ENCODE measurements at regions of chr10 and their contacts with region 1.

Region 1: DNA sequence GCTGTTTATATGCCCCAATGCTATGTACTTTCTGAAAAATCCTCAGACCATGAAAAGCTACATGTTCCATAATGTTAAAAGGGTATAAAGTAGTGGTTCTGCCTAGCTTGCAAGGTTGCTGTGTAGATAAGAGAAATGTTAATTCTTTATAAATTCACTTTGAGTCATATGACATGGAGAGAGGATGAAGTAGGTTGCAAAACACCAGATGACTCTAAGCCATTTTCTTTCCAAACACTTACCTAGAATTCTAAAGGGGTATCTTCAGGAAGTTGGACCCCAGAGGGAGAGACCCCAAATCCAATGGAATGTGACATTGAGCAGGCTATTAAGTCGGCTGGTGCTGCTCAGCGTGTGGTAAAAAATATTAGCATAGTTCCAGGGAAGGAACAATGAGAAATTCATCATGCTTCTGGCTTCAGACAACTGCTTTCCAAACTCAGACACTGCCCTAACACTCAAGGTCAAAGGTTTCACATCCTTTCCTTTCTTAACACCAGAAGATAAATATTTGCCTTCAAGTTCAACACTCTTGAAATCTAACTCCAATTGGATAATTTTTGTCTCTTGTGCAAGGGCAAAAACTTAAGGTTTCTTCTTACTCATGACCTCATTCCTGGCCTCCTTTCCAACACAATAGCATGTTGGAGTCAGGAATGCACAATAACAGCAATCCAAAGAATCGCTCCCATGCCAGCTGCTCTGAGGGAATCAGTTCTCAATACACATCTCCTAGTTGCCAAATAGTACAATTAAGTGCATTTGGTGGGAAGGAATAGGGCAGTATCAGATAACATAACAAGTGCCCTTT is 100.7 kb upstream of the AFAP1L2 start:
- DNase-seq: no peak
- ATAC-seq: no peak
- H3K4me3 ChIP-seq: no peak overlapping the region
- H3K4me3 Mint-ChIP-seq: no peak overlapping the region
- H3K27ac ChIP-seq: no peak overlapping the region
- H3K27ac Mint-ChIP-seq: peak overlapping the region; percentile 78
- H3K4me1 ChIP-seq: peaks cover 96% of the 10 kb centered on the region
- H3K4me1 Mint-ChIP-seq: peaks cover 92% of the 10 kb centered on the region
- H3K27me3 ChIP-seq: no peaks in the 10 kb centered on the region
- H3K27me3 Mint-ChIP-seq: no peaks in the 10 kb centered on the region
- CTCF ChIP-seq: no peak

Region 2: DNA sequence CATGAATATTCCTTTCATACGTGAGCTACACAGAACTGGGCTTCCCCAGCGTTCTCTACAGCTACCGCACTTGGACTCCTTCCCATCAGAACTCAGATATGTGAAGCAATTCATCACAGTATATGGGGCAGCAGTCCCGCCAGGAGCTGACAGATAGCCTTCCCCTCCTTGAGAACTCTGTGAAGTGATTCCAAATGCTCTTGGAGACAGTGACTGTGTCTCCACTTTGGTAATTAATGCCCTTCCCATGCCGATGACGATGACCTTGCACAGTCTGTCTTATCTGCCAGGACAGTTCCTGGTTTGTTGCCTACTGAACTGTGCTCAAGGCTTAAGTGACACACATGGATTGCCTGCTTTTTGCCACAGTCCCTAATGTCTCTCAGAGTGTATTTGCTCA is 25.7 kb before region 1 on chr10:
- CTCF ChIA-PET with region 1: no interaction called
- POLR2A ChIA-PET with region 1: no interaction called
- intact Hi-C with region 1: no loop called
- DNase-seq: no peak
- ATAC-seq: no peak
- H3K4me3 ChIP-seq: no peak overlapping the region
- H3K4me3 Mint-ChIP-seq: no peak overlapping the region
- H3K27ac ChIP-seq: no peak overlapping the region
- H3K27ac Mint-ChIP-seq: peak overlapping the region; percentile 64
- H3K4me1 ChIP-seq: peaks cover 26% of the 10 kb centered on the region
- H3K4me1 Mint-ChIP-seq: peaks cover 85% of the 10 kb centered on the region
- H3K27me3 ChIP-seq: no peaks in the 10 kb centered on the region
- H3K27me3 Mint-ChIP-seq: no peaks in the 10 kb centered on the region
- CTCF ChIP-seq: no peak

Region 3: GRCh38 chr10:114520453-114520852 is 15.5 kb after region 1 on chr10:
- CTCF ChIA-PET with region 1: interaction called, 4 read pairs
- POLR2A ChIA-PET with region 1: interaction called, 29 read pairs
- intact Hi-C with region 1: no loop called
- DNase-seq: peak in 2 of 9 experiments; percentile 43 to 56
- ATAC-seq: peak; percentile 4
- H3K4me3 ChIP-seq: no peak overlapping the region
- H3K4me3 Mint-ChIP-seq: peak overlapping the region; percentile 73
- H3K27ac ChIP-seq: peak overlapping the region; percentile 15 to 93
- H3K27ac Mint-ChIP-seq: peak overlapping the region; percentile 97
- H3K4me1 ChIP-seq: peaks cover 91% of the 10 kb centered on the region
- H3K4me1 Mint-ChIP-seq: peaks cover 94% of the 10 kb centered on the region
- H3K27me3 ChIP-seq: no peaks in the 10 kb centered on the region
- H3K27me3 Mint-ChIP-seq: no peaks in the 10 kb centered on the region
- CTCF ChIP-seq: no peak

Measured in CD8-positive, alpha-beta T cell (primary cell).